IMR-90 (cell line): ENCODE measurements at regions of chr4 and their contacts with region 1.

Region 1: DNA sequence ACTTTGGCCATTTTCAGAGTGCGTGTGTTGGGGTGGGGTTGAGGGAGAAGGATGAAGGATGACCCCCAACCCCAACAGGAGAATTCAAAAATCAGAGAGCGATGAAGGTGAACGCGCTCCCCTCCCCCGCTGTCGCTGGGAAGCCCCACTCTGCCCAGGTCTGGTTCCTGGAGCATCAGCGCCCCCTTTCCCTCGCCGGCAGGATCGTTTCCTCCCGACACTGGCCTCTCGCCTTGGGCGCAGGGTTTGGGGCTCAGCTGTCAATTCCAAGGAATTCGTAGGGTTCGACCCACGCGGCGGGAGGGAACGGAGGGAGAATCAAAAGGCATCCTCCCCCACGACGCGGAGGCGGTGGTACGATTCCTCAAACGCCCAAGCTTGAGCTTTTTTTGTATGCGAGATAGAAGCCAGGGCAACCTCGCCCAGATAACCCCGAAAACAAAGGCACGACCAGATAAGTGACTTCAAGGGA is 1.0 kb upstream of the PDGFRA start:
- DNase-seq: peak; percentile 82
- ATAC-seq: peak; percentile 48
- H3K4me3 ChIP-seq: peak overlapping the region; percentile 89
- H3K27ac ChIP-seq: peak overlapping the region; percentile 83
- H3K4me1 ChIP-seq: peaks cover 15% of the 10 kb centered on the region
- H3K27me3 ChIP-seq: no peaks in the 10 kb centered on the region
- CTCF ChIP-seq: peak; percentile 95
- POLR2A ChIP-seq: peak; percentile 26; the same call in 1 of the 2 replicates
- RAD21 ChIP-seq: peak; percentile 97

Region 2: DNA sequence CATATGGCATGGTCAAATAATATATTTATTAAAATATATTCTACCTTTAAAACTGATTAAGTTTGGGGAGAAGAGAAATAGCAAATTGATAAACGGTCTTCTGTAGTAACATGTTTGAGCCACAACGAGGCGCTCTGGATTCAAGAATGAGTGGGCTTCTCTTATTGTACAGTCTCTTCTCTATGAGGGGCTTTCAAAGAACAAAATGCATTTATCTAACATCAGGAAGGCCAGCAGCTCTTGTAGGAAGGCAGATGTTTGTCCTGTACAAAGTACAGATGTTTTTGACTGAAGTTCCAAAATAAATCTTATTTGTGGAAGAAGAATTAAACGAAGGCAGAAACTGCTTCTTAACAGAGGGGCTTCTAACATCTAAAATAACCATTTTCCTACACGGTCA is 1212.4 kb before region 1 on chr4:
- CTCF ChIA-PET with region 1: no interaction called
- POLR2A ChIA-PET with region 1: interaction called, 6 read pairs
- dilution Hi-C with region 1: no loop called
- in situ Hi-C with region 1: loop called (anchors 5 kb)
- intact Hi-C with region 1: loop called (anchors 1 kb)
- DNase-seq: peak; percentile 81
- ATAC-seq: peak; percentile 44; the same call in 1 of the 2 replicates
- H3K4me3 ChIP-seq: no peak overlapping the region
- H3K27ac ChIP-seq: no peak overlapping the region
- H3K4me1 ChIP-seq: peaks cover 28% of the 10 kb centered on the region
- H3K27me3 ChIP-seq: no peaks in the 10 kb centered on the region
- CTCF ChIP-seq: peak; percentile 81
- POLR2A ChIP-seq: no peak
- RAD21 ChIP-seq: peak; percentile 93

Region 3: GRCh38 chr4:53377319-53378170 is 850.5 kb before region 1 on chr4 and contains the start of gene FIP1L1:
- CTCF ChIA-PET with region 1: no interaction called
- POLR2A ChIA-PET with region 1: no interaction called
- dilution Hi-C with region 1: no loop called
- in situ Hi-C with region 1: no loop called
- intact Hi-C with region 1: loop called (anchors 5 kb)
- DNase-seq: peak; percentile 87
- ATAC-seq: peak; percentile 96
- H3K4me3 ChIP-seq: peak within 1 kb of the TSS; percentile 93
- H3K27ac ChIP-seq: peak within 1 kb of the TSS; percentile 95
- H3K4me1 ChIP-seq: no peaks in the 10 kb centered on the region; the same call in 1 of the 2 replicates
- H3K27me3 ChIP-seq: no peaks in the 10 kb centered on the region
- CTCF ChIP-seq: no peak
- POLR2A ChIP-seq: peak; percentile 74
- RAD21 ChIP-seq: no peak
- total RNA-seq, gene FIP1L1: 37.5 and 48.9 TPM in 2 replicates

Region 4: GRCh38 chr4:53576676-53577372 is 651.3 kb before region 1 on chr4:
- CTCF ChIA-PET with region 1: no interaction called
- POLR2A ChIA-PET with region 1: no interaction called
- dilution Hi-C with region 1: no loop called
- in situ Hi-C with region 1: no loop called
- intact Hi-C with region 1: loop called (anchors 5 kb)
- DNase-seq: peak; percentile 90
- ATAC-seq: peak; percentile 76
- H3K4me3 ChIP-seq: no peak overlapping the region
- H3K27ac ChIP-seq: peak overlapping the region; percentile 100
- H3K4me1 ChIP-seq: peaks cover 32% of the 10 kb centered on the region
- H3K27me3 ChIP-seq: no peaks in the 10 kb centered on the region
- CTCF ChIP-seq: no peak
- POLR2A ChIP-seq: no peak
- RAD21 ChIP-seq: no peak

Region 5: GRCh38 chr4:53786632-53787031 is 441.5 kb before region 1 on chr4:
- CTCF ChIA-PET with region 1: no interaction called
- POLR2A ChIA-PET with region 1: no interaction called
- dilution Hi-C with region 1: no loop called
- in situ Hi-C with region 1: no loop called
- intact Hi-C with region 1: loop called (anchors 5 kb)
- DNase-seq: peak; percentile 93
- ATAC-seq: peak; percentile 77
- H3K4me3 ChIP-seq: no peak overlapping the region
- H3K27ac ChIP-seq: peak overlapping the region; percentile 93
- H3K4me1 ChIP-seq: peaks cover 39% of the 10 kb centered on the region
- H3K27me3 ChIP-seq: no peaks in the 10 kb centered on the region
- CTCF ChIP-seq: no peak
- POLR2A ChIP-seq: no peak
- RAD21 ChIP-seq: no peak